ENCODE measurements at regions of chr9 and their contacts with region 1.

Region 1: GRCh38 chr9:111078391-111079038 is 40.2 kb upstream of the LPAR1 start:
- DNase-seq: no peak
- ATAC-seq: no peak
- H3K4me3 ChIP-seq: no peak overlapping the region
- H3K27ac ChIP-seq: no peak overlapping the region
- H3K4me1 ChIP-seq: no peaks in the 10 kb centered on the region
- H3K27me3 ChIP-seq: no peaks in the 10 kb centered on the region
- CTCF ChIP-seq: no peak

Region 2: DNA sequence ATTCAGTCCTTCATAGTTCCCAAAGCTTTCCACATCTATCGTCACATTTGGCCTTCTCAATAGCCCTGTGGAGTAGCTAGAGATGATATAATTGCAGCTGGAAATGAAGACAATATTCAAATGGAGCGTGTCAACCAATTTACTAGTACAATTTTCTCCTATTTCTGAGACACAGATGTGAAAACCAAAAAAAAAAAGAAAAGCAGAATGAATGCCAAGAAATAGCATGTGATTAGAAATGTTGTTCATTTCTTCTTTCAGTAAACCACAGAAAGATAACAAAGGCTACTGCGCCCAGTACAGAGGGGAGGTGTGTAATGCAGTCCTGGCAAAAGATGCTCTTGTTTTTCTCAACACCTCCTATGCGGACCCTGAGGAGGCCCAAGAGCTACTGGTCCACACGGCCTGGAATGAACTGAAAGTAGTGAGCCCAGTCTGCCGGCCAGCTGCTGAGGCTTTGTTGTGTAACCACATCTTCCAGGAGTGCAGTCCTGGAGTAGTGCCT is 310.9 kb before region 1 on chr9:
- CTCF ChIA-PET with region 1: no interaction called
- POLR2A ChIA-PET with region 1: interaction called, 14 read pairs
- in situ Hi-C with region 1: no loop called
- intact Hi-C with region 1: no loop called
- DNase-seq: no peak
- ATAC-seq: no peak
- H3K4me3 ChIP-seq: no peak overlapping the region
- H3K27ac ChIP-seq: no peak overlapping the region
- H3K4me1 ChIP-seq: no peaks in the 10 kb centered on the region
- H3K27me3 ChIP-seq: no peaks in the 10 kb centered on the region
- CTCF ChIP-seq: no peak

Region 3: GRCh38 chr9:110933350-110934001 is 145.0 kb before region 1 on chr9:
- CTCF ChIA-PET with region 1: no interaction called
- POLR2A ChIA-PET with region 1: no interaction called
- in situ Hi-C with region 1: no loop called
- intact Hi-C with region 1: no loop called
- DNase-seq: no peak
- ATAC-seq: no peak
- H3K4me3 ChIP-seq: no peak overlapping the region
- H3K27ac ChIP-seq: no peak overlapping the region; the same call in 1 of the 2 replicates
- H3K4me1 ChIP-seq: no peaks in the 10 kb centered on the region
- H3K27me3 ChIP-seq: no peaks in the 10 kb centered on the region
- CTCF ChIP-seq: no peak

Measured in Panc1 (cell line).